Natural killer cell (primary cell): ENCODE measurements at regions of chr5 and their contacts with region 1.

Region 1: GRCh38 chr5:62284946-62285891 is 20.8 kb upstream of the KIF2A start:
- DNase-seq: peak in 1 of 2 donors; percentile 51
- ATAC-seq: peak; percentile 70 to 80 (median 71)
- H3K4me3 ChIP-seq: no peak overlapping the region
- H3K4me3 Mint-ChIP-seq: no peak overlapping the region
- H3K27ac ChIP-seq: no peak overlapping the region
- H3K27ac Mint-ChIP-seq: no peak overlapping the region
- H3K4me1 ChIP-seq: no peaks in the 10 kb centered on the region
- H3K4me1 Mint-ChIP-seq: peaks cover 10 to 20% of the 10 kb centered on the region in 2 donors
- H3K27me3 ChIP-seq: no peaks in the 10 kb centered on the region
- H3K27me3 Mint-ChIP-seq: peaks cover 8 to 15% of the 10 kb centered on the region in 2 donors
- CTCF ChIP-seq: no peak

Region 2: DNA sequence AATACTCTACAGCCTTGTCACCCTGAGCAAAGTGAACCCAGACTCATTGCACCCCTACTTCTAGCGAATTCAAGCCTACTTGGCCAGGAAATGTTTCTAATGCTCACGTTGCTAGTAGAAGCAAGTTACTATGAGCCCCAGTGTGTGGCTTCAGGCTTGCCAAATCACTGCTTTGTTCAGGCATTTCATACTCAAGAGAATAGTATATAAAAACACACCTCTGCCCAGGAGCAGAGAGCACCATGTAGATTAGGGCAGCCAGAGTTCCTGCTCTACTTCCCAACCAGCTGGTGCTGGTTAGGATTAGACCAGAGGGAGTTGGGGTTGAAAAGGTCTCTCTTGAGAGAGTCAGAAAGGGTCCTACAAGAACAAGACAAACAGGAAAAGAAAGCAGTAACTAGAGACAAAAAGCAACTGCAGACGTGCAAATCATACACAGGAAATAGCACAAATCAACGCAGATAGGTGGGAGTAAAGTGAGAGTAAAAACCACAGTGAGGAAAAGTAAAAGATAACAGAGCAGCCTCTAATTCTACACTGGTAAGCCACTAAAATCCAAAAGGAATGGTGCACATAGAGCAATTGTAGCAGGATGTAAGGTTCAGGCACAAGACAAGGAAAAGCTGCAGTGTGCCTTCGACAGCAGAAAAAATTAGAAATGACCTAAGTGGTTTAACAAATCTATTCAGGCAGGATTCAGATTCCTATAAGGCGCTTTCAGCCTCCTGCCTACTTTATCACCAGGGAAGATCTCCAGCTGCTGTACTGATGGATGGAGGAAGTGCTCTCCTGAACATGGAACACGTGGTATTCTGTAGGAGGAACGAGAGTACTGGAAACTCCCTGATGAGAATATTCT is 28.8 kb before region 1 on chr5:
- intact Hi-C with region 1: loop called (anchors 2 kb)
- DNase-seq: peak in 1 of 2 donors; percentile 65
- ATAC-seq: peak; percentile 64 to 76 (median 69)
- H3K4me3 ChIP-seq: no peak overlapping the region
- H3K4me3 Mint-ChIP-seq: peak overlapping the region; percentile 45
- H3K27ac ChIP-seq: peak overlapping the region; percentile 43
- H3K27ac Mint-ChIP-seq: peak overlapping the region; percentile 68 to 79
- H3K4me1 ChIP-seq: peaks cover 8% of the 10 kb centered on the region
- H3K4me1 Mint-ChIP-seq: peaks cover 9 to 12% of the 10 kb centered on the region in 2 donors
- H3K27me3 ChIP-seq: no peaks in the 10 kb centered on the region
- H3K27me3 Mint-ChIP-seq: peaks cover 0 to 12% of the 10 kb centered on the region in 2 donors
- CTCF ChIP-seq: no peak

Region 3: DNA sequence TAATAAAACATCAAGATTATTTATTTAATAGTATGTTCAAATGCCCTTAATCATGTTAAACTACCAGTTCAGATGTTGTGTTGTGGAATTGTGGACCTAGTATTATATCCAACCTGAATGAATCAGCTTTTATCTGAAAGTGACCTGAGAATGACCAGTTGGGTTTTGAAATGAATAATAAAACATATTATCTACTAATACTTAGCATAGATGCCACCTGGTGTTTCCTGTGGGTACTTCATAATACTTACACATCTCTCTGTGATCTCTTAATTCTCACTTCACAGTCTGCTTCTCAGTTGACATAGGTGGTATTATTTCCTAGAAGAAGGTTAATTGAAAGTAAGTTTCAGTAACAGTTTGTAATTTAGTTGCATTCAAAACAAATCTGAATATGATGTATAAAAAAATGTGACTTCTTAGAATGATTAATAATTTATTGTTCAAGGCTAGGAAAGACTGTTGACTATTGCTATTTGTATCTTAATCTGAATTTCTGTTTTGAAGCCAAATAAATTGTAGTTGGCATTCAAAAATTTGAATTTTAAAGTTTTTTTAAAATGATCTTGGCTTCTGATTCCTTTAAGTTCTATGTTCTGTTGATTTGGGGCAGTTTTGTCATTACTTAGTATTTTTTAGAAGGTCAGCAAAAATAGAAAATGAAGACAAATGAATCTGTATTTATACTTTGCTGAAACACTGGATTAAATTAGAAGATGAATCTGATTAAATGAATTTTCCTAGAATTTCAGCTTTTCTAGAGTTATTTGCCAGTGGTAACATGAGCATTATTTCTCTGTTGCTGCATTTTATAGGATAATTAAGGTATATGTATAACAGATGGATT is 69.0 kb after region 1 on chr5:
- intact Hi-C with region 1: loop called (anchors 5 kb)
- DNase-seq: peak in 1 of 2 donors; percentile 78
- ATAC-seq: peak; percentile 62 to 85 (median 73)
- H3K4me3 ChIP-seq: no peak overlapping the region
- H3K4me3 Mint-ChIP-seq: no peak overlapping the region
- H3K27ac ChIP-seq: no peak overlapping the region
- H3K27ac Mint-ChIP-seq: peak overlapping the region; percentile 27 to 57
- H3K4me1 ChIP-seq: no peaks in the 10 kb centered on the region
- H3K4me1 Mint-ChIP-seq: no peaks in the 10 kb centered on the region
- H3K27me3 ChIP-seq: no peaks in the 10 kb centered on the region
- H3K27me3 Mint-ChIP-seq: no peaks in the 10 kb centered on the region
- CTCF ChIP-seq: peak; percentile 78

Region 4: GRCh38 chr5:62569470-62569869 is 284.3 kb after region 1 on chr5:
- intact Hi-C with region 1: no loop called
- DNase-seq: no peak
- ATAC-seq: no peak
- H3K4me3 ChIP-seq: no peak overlapping the region
- H3K4me3 Mint-ChIP-seq: no peak overlapping the region
- H3K27ac ChIP-seq: no peak overlapping the region
- H3K27ac Mint-ChIP-seq: no peak overlapping the region
- H3K4me1 ChIP-seq: peaks cover 5% of the 10 kb centered on the region
- H3K4me1 Mint-ChIP-seq: peaks cover 14 to 16% of the 10 kb centered on the region in 2 donors
- H3K27me3 ChIP-seq: no peaks in the 10 kb centered on the region
- H3K27me3 Mint-ChIP-seq: no peaks in the 10 kb centered on the region
- CTCF ChIP-seq: no peak